ENCODE measurements at regions of chr9 and their contacts with region 1.

Region 1: DNA sequence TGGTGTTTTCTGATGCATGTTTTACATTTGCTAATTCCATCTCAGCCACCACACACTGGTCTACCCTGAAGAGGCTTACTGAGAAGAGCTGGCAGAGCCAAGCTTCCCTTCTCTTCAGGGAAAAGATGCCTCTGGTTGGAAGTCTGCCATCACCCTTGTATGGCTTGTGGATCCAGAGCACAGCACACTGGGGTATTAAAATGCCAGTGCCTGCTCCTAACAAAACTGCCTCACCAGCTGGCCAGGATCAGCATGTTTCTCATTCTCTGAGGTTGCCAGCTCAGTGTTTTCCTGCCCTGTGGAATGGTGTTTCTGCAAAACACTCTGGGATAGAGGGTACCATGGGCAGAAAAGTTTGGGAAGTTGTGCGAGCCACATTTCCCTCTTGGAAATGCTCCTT is 31.6 kb upstream of the ZNF618 start:
- DNase-seq: no peak
- H3K4me3 Mint-ChIP-seq: no peak overlapping the region
- H3K27ac Mint-ChIP-seq: no peak overlapping the region
- H3K4me1 Mint-ChIP-seq: no peaks in the 10 kb centered on the region
- H3K27me3 Mint-ChIP-seq: no peaks in the 10 kb centered on the region

Region 2: GRCh38 chr9:113446323-113446740 is 398.1 kb before region 1 on chr9:
- CTCF ChIA-PET with region 1: no interaction called
- POLR2A ChIA-PET with region 1: no interaction called
- intact Hi-C with region 1: no loop called
- DNase-seq: no peak
- H3K4me3 Mint-ChIP-seq: no peak overlapping the region
- H3K27ac Mint-ChIP-seq: peak overlapping the region; percentile 55
- H3K4me1 Mint-ChIP-seq: no peaks in the 10 kb centered on the region
- H3K27me3 Mint-ChIP-seq: no peaks in the 10 kb centered on the region

Region 3: DNA sequence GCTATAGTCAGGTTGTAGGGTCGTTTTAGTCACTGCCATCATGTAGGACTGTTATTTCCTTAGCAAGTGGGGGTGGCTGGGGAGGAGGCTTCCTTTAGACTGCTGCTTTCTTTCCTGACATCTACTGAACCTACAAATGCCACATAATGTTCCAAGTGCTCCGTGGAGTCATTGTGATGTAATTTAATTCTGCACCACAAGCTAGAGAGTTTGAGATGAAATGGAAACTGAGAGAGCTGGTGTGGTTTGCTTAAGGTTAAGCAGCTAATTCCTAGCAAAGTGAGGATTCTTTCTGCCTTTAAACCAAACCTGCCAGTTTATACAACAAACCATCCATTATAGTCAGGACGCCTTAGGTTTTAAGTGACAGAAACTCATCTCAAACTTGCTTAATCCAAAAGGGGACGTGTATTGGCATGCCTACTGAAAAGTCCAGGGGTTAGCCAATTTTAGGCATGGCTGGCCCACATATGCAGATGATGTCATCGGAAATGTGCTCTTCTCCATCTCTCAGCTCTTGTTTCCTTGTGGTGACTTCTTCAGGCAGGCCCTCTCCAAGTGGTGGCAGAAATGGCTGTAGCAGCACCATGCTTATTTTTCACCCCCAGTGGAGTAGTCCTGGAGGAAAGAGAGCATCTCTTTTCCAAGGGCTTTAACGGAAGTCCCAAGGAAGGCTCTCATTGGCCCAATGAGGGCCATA is 62.1 kb after region 1 on chr9:
- CTCF ChIA-PET with region 1: no interaction called
- POLR2A ChIA-PET with region 1: no interaction called
- intact Hi-C with region 1: loop called (anchors 10 kb)
- DNase-seq: no peak
- H3K4me3 Mint-ChIP-seq: no peak overlapping the region
- H3K27ac Mint-ChIP-seq: no peak overlapping the region
- H3K4me1 Mint-ChIP-seq: no peaks in the 10 kb centered on the region
- H3K27me3 Mint-ChIP-seq: peaks cover 2% of the 10 kb centered on the region